ENCODE measurements at regions of chr10 and their contacts with region 1.

Region 1: GRCh38 chr10:91797874-91798648 is at the start of gene TNKS2:
- DNase-seq: peak; percentile 93
- H3K4me3 Mint-ChIP-seq: peak within 1 kb of the TSS; percentile 97
- H3K27ac Mint-ChIP-seq: peak within 1 kb of the TSS; percentile 98
- H3K4me1 Mint-ChIP-seq: peaks cover 62% of the 10 kb centered on the region
- H3K27me3 Mint-ChIP-seq: no peaks in the 10 kb centered on the region
- total RNA-seq, gene TNKS2: 29.9 and 30.6 TPM in 2 replicates

Region 2: GRCh38 chr10:91006001-91006751 is 791.9 kb before region 1 on chr10:
- intact Hi-C with region 1: loop called (anchors 2 kb)
- DNase-seq: peak; percentile 41
- H3K4me3 Mint-ChIP-seq: peak overlapping the region; percentile 8
- H3K27ac Mint-ChIP-seq: peak overlapping the region; percentile 58
- H3K4me1 Mint-ChIP-seq: peaks cover 27% of the 10 kb centered on the region
- H3K27me3 Mint-ChIP-seq: peaks cover 28% of the 10 kb centered on the region

Region 3: DNA sequence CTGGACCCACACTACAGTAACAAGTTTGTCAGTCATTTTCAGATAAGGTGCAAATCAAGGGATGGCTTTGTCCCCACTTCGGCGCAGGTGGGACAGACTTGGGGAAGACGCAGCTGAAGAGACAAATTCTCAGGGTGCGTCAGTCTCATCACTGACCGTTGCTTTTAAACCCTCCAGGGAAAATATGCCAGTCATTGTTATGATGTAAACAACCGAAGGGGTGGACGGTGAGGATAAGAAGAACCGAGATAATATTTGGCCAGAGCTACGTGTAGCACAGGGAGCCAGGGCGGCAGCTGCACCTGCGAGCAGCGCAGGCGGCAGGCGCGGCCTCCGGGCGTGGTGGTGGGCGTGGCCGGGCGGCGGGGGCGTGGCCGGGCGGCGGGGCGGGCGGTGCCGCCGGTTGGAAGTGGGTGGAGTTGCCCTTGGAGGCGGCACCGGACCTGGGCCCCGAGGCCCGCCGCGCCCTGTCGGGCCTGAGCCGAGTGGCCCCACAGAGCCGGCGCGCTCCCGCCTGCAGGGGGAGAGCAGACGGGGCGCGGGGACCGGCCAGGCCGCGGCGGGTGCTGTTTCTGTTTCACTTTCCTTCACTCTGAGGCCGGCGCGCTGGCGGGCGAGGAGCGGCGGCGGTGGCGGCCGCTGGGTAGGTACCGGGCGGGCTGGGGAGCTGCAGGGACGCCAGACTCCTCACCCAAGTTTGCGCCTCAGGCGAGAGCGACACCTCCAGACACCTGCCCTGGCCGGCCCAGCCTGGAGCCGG is 577.7 kb before region 1 on chr10 and contains the start of gene PCGF5:
- intact Hi-C with region 1: loop called (anchors 5 kb)
- DNase-seq: peak; percentile 91
- H3K4me3 Mint-ChIP-seq: peak within 1 kb of the TSS; percentile 91
- H3K27ac Mint-ChIP-seq: peak within 1 kb of the TSS; percentile 79
- H3K4me1 Mint-ChIP-seq: peaks cover 54% of the 10 kb centered on the region
- H3K27me3 Mint-ChIP-seq: no peaks in the 10 kb centered on the region
- total RNA-seq, gene PCGF5: 51.7 TPM in 2 replicates

Region 4: DNA sequence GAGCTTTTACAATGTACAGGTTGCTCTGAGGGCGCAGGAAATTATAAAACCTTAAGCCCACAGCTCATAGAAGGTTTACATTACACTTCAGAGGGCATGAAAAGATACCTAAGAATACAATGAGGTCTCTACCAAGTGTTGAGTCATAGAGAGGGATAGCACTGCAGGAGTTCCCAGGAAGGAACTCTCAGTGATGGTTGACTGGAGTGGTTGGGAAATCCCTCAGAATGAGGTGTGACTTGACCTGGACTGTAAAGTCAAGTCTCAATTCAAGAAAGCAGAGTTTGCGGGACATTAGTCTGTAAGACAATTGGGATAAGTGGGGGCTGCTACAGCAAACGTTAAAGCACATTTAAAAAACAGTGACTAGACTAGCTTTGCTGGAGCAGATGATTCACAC is 22.1 kb after region 1 on chr10:
- intact Hi-C with region 1: no loop called
- DNase-seq: no peak
- H3K4me3 Mint-ChIP-seq: no peak overlapping the region
- H3K27ac Mint-ChIP-seq: no peak overlapping the region
- H3K4me1 Mint-ChIP-seq: no peaks in the 10 kb centered on the region
- H3K27me3 Mint-ChIP-seq: no peaks in the 10 kb centered on the region

Region 5: DNA sequence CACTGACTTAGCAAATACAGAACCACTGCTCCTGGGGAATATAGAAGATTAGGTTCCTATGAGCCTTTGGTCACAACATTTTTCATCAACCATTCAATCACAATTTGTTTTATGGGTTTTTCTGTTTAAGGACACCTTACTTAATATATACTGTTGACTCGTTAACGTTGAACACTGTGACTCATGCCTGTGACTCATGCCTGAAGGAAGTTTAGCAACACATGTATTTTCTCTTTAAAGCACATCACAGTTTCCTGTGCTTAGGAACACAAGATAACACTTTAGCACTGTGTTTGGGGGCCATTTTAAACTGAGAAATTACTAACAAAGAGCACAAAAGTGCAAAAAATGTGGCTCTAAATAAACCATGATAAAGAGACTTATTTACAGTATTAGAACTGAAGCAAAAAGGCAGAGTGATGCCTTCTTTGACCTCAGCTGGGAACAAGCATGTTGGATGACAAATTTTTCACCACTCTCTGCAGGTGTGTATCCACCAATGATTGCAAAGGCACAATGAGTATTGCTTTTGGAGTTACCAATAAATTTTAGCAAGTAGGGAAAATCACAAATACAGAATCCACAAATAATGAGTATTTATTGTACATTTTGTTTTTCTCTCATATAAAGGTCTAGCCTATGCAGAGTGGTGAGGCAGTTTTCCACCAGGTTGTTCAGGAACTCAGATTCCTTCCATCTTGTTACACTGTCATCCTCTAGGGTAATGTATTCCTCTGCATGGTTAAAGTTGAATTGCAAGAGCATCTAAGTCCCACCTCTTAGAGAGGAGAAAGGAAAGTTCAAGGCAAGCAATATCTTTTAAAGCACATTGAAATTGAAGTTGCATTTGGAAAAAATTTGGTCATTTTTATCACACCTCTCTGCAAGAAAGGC is 104.0 kb after region 1 on chr10:
- intact Hi-C with region 1: loop called (anchors 1 kb)
- DNase-seq: no peak
- H3K4me3 Mint-ChIP-seq: peak overlapping the region; percentile 45
- H3K27ac Mint-ChIP-seq: peak overlapping the region; percentile 90
- H3K4me1 Mint-ChIP-seq: peaks cover 28% of the 10 kb centered on the region
- H3K27me3 Mint-ChIP-seq: peaks cover 4% of the 10 kb centered on the region

Region 6: DNA sequence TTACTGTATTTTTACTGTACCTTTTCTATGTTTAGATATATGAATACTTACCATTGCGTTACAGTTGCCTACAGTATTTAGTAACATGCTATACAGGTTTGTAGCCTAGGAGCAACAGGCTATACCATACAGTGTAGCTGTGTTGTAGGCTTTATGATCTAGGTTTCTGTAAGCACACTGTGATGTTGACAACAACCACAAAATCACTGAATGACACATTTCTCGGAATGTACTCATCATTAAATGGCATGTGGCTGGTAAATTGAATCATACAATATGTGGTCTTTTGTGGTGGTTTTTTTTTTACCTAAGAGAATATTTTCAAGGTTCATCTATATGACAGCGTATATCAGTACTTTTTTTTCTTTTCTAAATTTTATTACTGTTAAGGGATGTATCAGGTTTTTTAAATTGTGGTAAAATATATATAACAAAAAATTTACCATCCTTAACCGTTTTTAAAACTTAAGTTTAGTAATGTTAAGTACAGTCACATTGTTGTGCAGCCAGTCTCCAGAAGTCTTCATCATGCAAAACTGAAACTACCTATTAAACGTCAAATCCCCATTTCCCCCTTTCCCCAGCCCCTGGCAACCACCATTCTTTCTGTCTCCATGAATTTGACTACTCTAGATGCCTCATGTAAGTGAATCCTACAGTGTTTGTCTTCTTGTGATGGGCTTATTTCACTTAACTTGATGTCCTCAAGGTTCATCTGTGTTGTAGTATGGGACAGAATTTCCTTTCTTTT is 147.0 kb after region 1 on chr10:
- intact Hi-C with region 1: loop called (anchors 1 kb)
- DNase-seq: peak; percentile 17
- H3K4me3 Mint-ChIP-seq: peak overlapping the region; percentile 59
- H3K27ac Mint-ChIP-seq: peak overlapping the region; percentile 95
- H3K4me1 Mint-ChIP-seq: peaks cover 29% of the 10 kb centered on the region
- H3K27me3 Mint-ChIP-seq: no peaks in the 10 kb centered on the region

Region 7: GRCh38 chr10:92208736-92209327 is 410.8 kb after region 1 on chr10:
- intact Hi-C with region 1: loop called (anchors 5 kb)
- DNase-seq: no peak
- H3K4me3 Mint-ChIP-seq: no peak overlapping the region
- H3K27ac Mint-ChIP-seq: no peak overlapping the region
- H3K4me1 Mint-ChIP-seq: peaks cover 20% of the 10 kb centered on the region
- H3K27me3 Mint-ChIP-seq: no peaks in the 10 kb centered on the region

Region 8: GRCh38 chr10:92848441-92849233 is 1050.6 kb after region 1 on chr10 and contains the start of gene EXOC6:
- intact Hi-C with region 1: loop called (anchors 10 kb)
- DNase-seq: peak; percentile 78
- H3K4me3 Mint-ChIP-seq: peak within 1 kb of the TSS; percentile 88
- H3K27ac Mint-ChIP-seq: peak within 1 kb of the TSS; percentile 93
- H3K4me1 Mint-ChIP-seq: peaks cover 38% of the 10 kb centered on the region
- H3K27me3 Mint-ChIP-seq: peaks cover 2% of the 10 kb centered on the region
- total RNA-seq, gene EXOC6: 13.5 TPM in 2 replicates

Measured in activated T-helper 1 cell treated with anti-CD3 and anti-CD28 coated beads, Interleukin-12 subunit alpha, Interleukin-12 subunit beta, Interleukin-2, Interleukin-4 antibody, amounts not matched to agents 30 ng/mL and 10 ng/mL and 1 ng/mL, durations not matched to agents 14 hours and 24 hours and 36 hours (primary cell).